Activated CD4-positive, alpha-beta memory T cell treated with anti-CD3 and anti-CD28 coated beads for 36 hours (primary cell): ENCODE measurements at regions of chr1 and their contacts with region 1.

Region 1: DNA sequence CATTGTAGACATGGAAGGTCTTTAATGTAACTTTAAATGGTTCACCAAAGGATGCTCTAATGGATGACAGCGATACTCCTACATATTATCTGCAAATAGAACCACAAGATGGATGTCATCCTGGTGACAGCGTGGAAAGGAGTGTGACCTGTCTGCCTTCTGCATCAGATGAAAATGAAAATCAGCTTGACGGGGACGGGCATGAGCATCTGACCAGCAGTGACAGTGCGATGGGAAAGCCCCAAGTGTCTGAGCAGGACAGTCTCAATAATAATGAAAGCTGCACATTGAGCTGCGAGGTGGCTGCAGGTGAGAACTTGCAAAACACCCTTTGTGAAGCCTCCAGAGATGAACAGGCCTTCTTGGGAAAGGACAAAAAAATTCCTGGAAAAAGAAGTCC is 25.2 kb downstream of the CNST start:
- DNase-seq: peak; percentile 65
- H3K4me3 Mint-ChIP-seq: no peak overlapping the region
- H3K27ac Mint-ChIP-seq: peak overlapping the region; percentile 71
- H3K4me1 Mint-ChIP-seq: peaks cover 50% of the 10 kb centered on the region
- H3K27me3 Mint-ChIP-seq: no peaks in the 10 kb centered on the region

Region 2: GRCh38 chr1:246602194-246602593 is 10.7 kb after region 1 on chr1:
- CTCF ChIA-PET with region 1: interaction called, 4 read pairs
- POLR2A ChIA-PET with region 1: no interaction called
- intact Hi-C with region 1: loop called (anchors 1 kb)
- DNase-seq: peak; percentile 43
- H3K4me3 Mint-ChIP-seq: no peak overlapping the region
- H3K27ac Mint-ChIP-seq: no peak overlapping the region
- H3K4me1 Mint-ChIP-seq: peaks cover 47% of the 10 kb centered on the region
- H3K27me3 Mint-ChIP-seq: no peaks in the 10 kb centered on the region